A673 (cell line): ENCODE measurements at regions of chr3 and their contacts with region 1.

Region 1: GRCh38 chr3:30779686-30780287 is 114.7 kb downstream of the GADL1 start:
- DNase-seq: peak; percentile 81
- H3K4me3 ChIP-seq: no peak overlapping the region
- H3K27ac ChIP-seq: no peak overlapping the region
- H3K4me1 ChIP-seq: peaks cover 23% of the 10 kb centered on the region
- H3K27me3 ChIP-seq: no peaks in the 10 kb centered on the region
- CTCF ChIP-seq: peak; percentile 64

Region 2: DNA sequence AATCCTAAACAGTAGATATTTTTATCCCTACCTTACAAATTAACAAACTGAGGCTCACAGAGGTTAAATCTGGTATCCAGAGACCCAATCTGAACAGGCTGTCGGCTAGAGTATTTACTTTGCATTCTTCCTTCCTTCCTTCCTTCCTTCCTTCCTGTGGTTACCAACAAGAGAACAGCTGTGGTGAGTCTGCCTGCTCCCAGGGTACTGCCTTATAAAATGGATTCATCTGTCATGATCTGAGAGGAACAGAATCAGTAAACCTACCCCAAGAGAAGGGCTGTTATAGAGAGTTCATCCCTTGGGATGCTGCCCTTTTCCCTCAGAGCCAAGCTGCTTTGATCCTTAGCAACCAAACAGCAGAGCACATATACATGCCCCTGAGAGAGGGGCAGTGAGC is 111.1 kb after region 1 on chr3:
- CTCF ChIA-PET with region 1: no interaction called
- POLR2A ChIA-PET with region 1: no interaction called
- intact Hi-C with region 1: loop called (anchors 1 kb)
- DNase-seq: peak; percentile 97
- H3K4me3 ChIP-seq: peak overlapping the region; percentile 4
- H3K27ac ChIP-seq: peak overlapping the region; percentile 92
- H3K4me1 ChIP-seq: peaks cover 54% of the 10 kb centered on the region
- H3K27me3 ChIP-seq: no peaks in the 10 kb centered on the region
- CTCF ChIP-seq: no peak

Region 3: GRCh38 chr3:31132132-31132769 is 352.5 kb after region 1 on chr3:
- CTCF ChIA-PET with region 1: interaction called, 5 read pairs
- POLR2A ChIA-PET with region 1: no interaction called
- intact Hi-C with region 1: loop called (anchors 1 kb)
- DNase-seq: peak; percentile 62
- H3K4me3 ChIP-seq: no peak overlapping the region
- H3K27ac ChIP-seq: no peak overlapping the region
- H3K4me1 ChIP-seq: no peaks in the 10 kb centered on the region
- H3K27me3 ChIP-seq: no peaks in the 10 kb centered on the region
- CTCF ChIP-seq: peak; percentile 63

Region 4: GRCh38 chr3:31531992-31532586 is 752.3 kb after region 1 on chr3:
- CTCF ChIA-PET with region 1: no interaction called
- POLR2A ChIA-PET with region 1: no interaction called
- intact Hi-C with region 1: loop called (anchors 10 kb)
- DNase-seq: peak; percentile 99
- H3K4me3 ChIP-seq: peak overlapping the region; percentile 89
- H3K27ac ChIP-seq: peak overlapping the region; percentile 97
- H3K4me1 ChIP-seq: peaks cover 3% of the 10 kb centered on the region
- H3K27me3 ChIP-seq: no peaks in the 10 kb centered on the region
- CTCF ChIP-seq: no peak

Region 5: GRCh38 chr3:32143849-32144757 is 1364.3 kb after region 1 on chr3:
- CTCF ChIA-PET with region 1: no interaction called
- POLR2A ChIA-PET with region 1: no interaction called
- intact Hi-C with region 1: loop called (anchors 10 kb)
- DNase-seq: peak; percentile 87
- H3K4me3 ChIP-seq: no peak overlapping the region
- H3K27ac ChIP-seq: no peak overlapping the region
- H3K4me1 ChIP-seq: no peaks in the 10 kb centered on the region
- H3K27me3 ChIP-seq: no peaks in the 10 kb centered on the region
- CTCF ChIP-seq: peak; percentile 79